Gastrocnemius medialis (tissue), 4 donors: ENCODE measurements at regions of chr13 and their contacts with region 1.

Region 1: DNA sequence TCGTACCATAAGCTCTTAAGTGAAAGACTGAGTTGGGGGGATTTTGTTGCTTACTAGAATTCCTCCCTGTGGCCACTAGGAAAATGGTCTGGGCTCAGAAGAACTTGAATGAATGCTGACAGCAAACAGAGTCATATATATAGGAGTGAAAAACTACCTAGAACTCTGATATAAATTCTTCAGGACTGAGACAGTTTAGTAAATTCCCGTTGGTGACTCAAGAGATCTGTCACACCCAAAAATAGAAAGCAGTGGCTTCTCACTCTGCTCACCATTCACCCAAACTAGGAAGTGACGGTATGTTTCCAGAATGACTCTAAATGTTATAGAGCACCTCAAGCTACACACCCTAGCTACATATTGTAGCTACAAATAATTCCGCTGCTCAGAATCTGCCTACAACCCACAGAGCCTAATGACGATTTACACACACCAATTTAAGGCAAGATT is 116.2 kb downstream of the TBC1D4 start:
- DNase-seq: no peak
- ATAC-seq: peak; percentile 88
- H3K4me3 ChIP-seq: peak overlapping the region; percentile 1 to 41 (median 32)
- H3K27ac ChIP-seq: peak overlapping the region; percentile 78 to 89 (median 84)
- H3K4me1 ChIP-seq: peaks cover 82 to 84% of the 10 kb centered on the region in 2 donors
- H3K27me3 ChIP-seq: no peaks in the 10 kb centered on the region
- CTCF ChIP-seq: peak in 1 of 5 experiments; percentile 48
- POLR2A ChIP-seq: no peak

Region 2: DNA sequence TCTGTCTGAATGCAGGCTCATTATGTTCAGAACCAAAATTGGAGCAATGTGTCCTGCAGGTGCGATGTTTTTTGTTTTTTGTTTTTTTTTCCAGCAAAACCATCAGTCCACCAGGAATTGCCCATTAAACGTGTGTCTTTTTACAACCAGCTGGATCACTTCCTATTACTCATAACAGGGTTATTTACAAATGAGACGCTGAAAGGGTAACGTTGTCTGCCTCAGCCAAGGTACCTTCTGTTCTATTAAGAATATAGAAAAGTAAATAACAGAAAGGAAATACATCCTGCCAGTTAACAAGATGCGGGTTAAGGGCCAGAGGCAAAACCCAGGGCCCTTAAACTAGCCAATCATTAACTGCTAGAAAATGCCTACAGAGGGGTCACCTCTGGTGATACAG is 474.1 kb before region 1 on chr13:
- in situ Hi-C with region 1: no loop called
- intact Hi-C with region 1: no loop called
- DNase-seq: no peak
- ATAC-seq: no peak
- H3K4me3 ChIP-seq: no peak overlapping the region
- H3K27ac ChIP-seq: no peak overlapping the region
- H3K4me1 ChIP-seq: no peaks in the 10 kb centered on the region
- H3K27me3 ChIP-seq: no peaks in the 10 kb centered on the region
- CTCF ChIP-seq: no peak
- POLR2A ChIP-seq: no peak

Region 3: GRCh38 chr13:75299913-75300862 is 65.6 kb before region 1 on chr13:
- in situ Hi-C with region 1: no loop called
- intact Hi-C with region 1: no loop called
- DNase-seq: no peak
- ATAC-seq: no peak
- H3K4me3 ChIP-seq: no peak overlapping the region
- H3K27ac ChIP-seq: peak overlapping the region in 1 of 4 donors; percentile 22
- H3K4me1 ChIP-seq: peaks cover 9 to 19% of the 10 kb centered on the region in 2 donors
- H3K27me3 ChIP-seq: no peaks in the 10 kb centered on the region
- CTCF ChIP-seq: no peak
- POLR2A ChIP-seq: no peak

Region 4: GRCh38 chr13:75402787-75403186 is 37.0 kb after region 1 on chr13:
- in situ Hi-C with region 1: no loop called
- intact Hi-C with region 1: no loop called
- DNase-seq: peak; percentile 55 to 67
- ATAC-seq: peak; percentile 88
- H3K4me3 ChIP-seq: no peak overlapping the region
- H3K27ac ChIP-seq: peak overlapping the region; percentile 80 to 89 (median 87)
- H3K4me1 ChIP-seq: peaks cover 77 to 90% of the 10 kb centered on the region in 2 donors
- H3K27me3 ChIP-seq: no peaks in the 10 kb centered on the region
- CTCF ChIP-seq: no peak
- POLR2A ChIP-seq: peak in 1 of 2 donors; percentile 25

Region 5: DNA sequence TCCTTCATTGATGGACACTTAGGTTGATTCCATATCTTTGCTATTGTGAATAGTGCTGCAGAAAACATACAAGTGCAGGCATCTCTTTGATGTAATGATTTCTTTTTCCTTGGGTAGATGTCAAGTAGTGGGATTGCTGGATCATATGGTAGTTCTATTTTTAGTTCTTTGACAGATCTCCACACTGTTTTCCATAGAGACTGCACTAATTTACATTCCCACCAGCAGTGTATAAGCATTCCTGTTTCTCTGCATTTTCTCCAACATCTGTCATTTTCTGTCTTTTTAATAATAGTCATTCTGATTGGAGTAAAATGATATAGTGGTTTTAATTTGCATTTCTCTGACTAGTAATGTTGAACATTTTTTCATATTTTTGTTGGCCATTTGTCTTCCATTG is 387.1 kb after region 1 on chr13:
- in situ Hi-C with region 1: no loop called
- intact Hi-C with region 1: loop called (anchors 10 kb)
- DNase-seq: no peak
- ATAC-seq: no peak
- H3K4me3 ChIP-seq: no peak overlapping the region
- H3K27ac ChIP-seq: no peak overlapping the region
- H3K4me1 ChIP-seq: peaks cover 0 to 11% of the 10 kb centered on the region in 2 donors
- H3K27me3 ChIP-seq: no peaks in the 10 kb centered on the region
- CTCF ChIP-seq: no peak
- POLR2A ChIP-seq: no peak

Region 6: GRCh38 chr13:75836441-75836840 is 470.7 kb after region 1 on chr13:
- in situ Hi-C with region 1: no loop called
- intact Hi-C with region 1: no loop called
- DNase-seq: peak in 1 of 2 donors; percentile 36
- ATAC-seq: peak; percentile 49 to 68
- H3K4me3 ChIP-seq: no peak overlapping the region
- H3K27ac ChIP-seq: peak overlapping the region in 3 of 4 donors; percentile 4 to 60 (median 41)
- H3K4me1 ChIP-seq: peaks cover 41 to 44% of the 10 kb centered on the region in 2 donors
- H3K27me3 ChIP-seq: no peaks in the 10 kb centered on the region
- CTCF ChIP-seq: no peak
- POLR2A ChIP-seq: no peak